ENCODE measurements at regions of chr19 and their contacts with region 1.

Region 1: DNA sequence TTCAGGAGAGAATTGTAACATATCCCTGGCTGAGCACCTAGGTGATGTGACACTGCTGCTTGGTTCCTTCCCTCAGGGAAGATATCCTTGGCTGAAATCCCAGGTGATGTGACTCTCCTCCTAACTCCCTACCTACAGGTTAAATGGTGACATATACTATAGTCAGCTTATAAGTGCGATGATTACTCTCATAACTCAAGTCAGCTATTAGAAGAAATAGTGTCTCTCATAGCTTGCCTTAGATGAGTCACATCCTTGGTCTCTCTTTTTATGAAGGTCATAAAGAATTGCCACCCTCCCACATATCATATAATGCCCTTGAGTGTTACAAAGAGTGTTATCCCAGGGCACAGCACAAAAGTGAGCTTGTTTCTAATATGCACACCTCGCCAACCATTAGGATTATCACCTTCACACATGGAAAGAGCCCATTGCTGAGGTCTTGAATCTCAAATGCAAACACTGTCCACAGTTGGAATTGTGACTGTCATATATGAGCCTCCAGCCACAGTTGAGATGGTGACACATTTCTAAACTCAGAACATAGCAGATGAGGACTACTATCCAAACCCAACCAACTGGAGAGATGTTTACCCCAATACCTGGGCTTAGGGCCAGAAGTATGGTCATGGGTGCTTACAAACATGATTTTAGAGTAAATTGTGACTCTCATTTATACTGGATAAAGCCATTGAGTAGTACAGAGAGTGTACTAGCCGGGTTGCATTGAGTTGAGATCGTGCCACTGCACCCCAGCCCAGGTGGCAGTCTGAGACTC is 13.8 kb upstream of the ZNF681 start:
- H3K4me3 ChIP-seq: no peak overlapping the region
- H3K27ac ChIP-seq: no peak overlapping the region
- H3K4me1 ChIP-seq: no peaks in the 10 kb centered on the region
- CTCF ChIP-seq: no peak

Region 2: DNA sequence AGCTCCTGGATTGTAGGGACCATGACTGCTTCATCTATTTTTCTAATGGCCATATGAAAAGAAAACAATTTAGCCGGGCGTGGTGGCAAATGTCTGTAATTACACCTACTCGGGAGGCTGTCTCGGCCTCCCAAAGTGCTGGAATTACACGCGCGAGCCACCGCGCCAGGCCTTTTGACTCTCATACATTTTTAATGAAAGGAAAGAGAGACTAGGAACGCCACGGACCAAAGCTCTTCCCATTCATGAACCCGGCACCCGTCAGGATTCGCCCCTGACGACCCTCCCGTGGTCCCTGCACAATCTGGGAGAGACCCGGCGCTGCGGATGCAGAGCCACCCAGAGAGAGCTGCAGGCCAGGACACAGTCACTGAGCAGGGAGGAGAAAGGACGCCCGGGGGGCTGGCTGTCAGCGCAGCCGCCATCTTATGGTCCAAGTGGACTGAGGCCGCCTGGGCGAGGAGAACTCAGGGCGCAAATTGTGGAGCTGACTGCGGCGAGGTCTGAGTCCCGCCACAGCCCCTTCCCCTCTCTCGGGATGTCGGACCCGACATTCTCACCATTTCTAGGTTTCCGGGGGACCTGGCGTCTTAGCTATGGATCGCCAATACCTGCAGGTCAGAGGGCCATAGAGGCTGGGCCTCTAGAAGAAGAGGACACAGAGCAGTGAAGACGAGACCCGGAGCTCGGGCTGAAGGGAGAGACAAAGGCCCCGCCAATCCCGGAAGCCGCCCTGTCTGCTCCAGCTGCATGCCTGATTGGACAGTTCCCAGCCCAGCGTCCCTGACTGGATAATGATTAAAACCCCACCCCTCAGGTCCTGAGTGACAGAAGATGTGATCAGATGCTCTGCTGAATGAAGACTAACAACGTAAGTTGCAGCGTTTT is 14.0 kb before region 1 on chr19 and contains the start of gene ZNF681:
- CTCF ChIA-PET with region 1: no interaction called
- POLR2A ChIA-PET with region 1: interaction called, 12 read pairs
- H3K4me3 ChIP-seq: peak within 1 kb of the TSS; percentile 74
- H3K27ac ChIP-seq: no peak within 1 kb of the TSS
- H3K4me1 ChIP-seq: no peaks in the 10 kb centered on the region
- CTCF ChIP-seq: no peak

Measured in HEK293 (cell line).